ENCODE measurements at regions of chr4 and their contacts with region 1.

Region 1: DNA sequence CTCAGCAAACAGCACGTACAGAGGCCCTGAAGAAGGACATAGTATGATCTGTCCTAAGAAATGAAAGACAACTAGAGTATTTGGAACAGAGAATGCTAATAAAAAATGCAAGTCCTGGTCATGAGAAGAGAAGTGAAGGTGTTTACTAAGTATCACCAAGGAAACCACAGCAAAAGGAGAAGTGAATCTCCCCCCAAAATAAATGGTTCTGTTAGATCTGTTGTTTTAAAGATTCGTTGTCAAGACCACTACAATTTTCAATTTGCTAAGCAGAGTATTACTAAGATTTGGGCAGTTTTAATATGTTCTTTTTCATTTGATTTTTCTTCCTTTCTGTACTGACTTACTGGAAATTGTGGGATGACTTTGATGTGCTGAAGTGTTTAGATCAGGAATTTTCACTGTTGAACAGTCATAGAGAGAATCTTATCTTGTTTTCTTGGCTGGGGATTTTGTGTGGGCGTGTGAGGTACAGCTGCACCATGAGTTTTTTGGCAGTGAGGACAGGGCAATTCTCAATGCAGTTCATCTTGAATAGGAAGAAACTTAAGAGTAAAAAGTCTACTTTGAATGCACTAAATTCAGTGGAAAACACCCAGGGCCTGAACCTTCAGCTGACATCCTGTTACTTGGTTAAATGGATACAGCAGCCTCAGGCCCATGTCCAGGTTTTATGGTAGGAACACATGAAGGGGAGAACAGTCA is 132.2 kb downstream of the STIM2 start:
- DNase-seq: peak; percentile 92
- ATAC-seq: peak; percentile 78
- H3K4me3 ChIP-seq: peak overlapping the region; percentile 10 to 54 (median 36)
- H3K4me3 Mint-ChIP-seq: no peak overlapping the region
- H3K27ac ChIP-seq: peak overlapping the region; percentile 97 to 99
- H3K27ac Mint-ChIP-seq: no peak overlapping the region
- H3K4me1 ChIP-seq: peaks cover 37 to 52% of the 10 kb centered on the region in 2 donors
- H3K4me1 Mint-ChIP-seq: peaks cover 36% of the 10 kb centered on the region
- H3K27me3 ChIP-seq: no peaks in the 10 kb centered on the region
- H3K27me3 Mint-ChIP-seq: no peaks in the 10 kb centered on the region
- CTCF ChIP-seq: no peak

Region 2: GRCh38 chr4:25234390-25235370 is 1758.1 kb before region 1 on chr4:
- CTCF ChIA-PET with region 1: no interaction called
- POLR2A ChIA-PET with region 1: no interaction called
- intact Hi-C with region 1: loop called (anchors 10 kb)
- DNase-seq: peak; percentile 85
- ATAC-seq: peak; percentile 50
- H3K4me3 ChIP-seq: peak overlapping the region; percentile 72 to 91 (median 79)
- H3K4me3 Mint-ChIP-seq: peak overlapping the region; percentile 85
- H3K27ac ChIP-seq: peak overlapping the region; percentile 84 to 85
- H3K27ac Mint-ChIP-seq: peak overlapping the region; percentile 82
- H3K4me1 ChIP-seq: peaks cover 25 to 29% of the 10 kb centered on the region in 2 donors
- H3K4me1 Mint-ChIP-seq: peaks cover 39% of the 10 kb centered on the region
- H3K27me3 ChIP-seq: no peaks in the 10 kb centered on the region
- H3K27me3 Mint-ChIP-seq: no peaks in the 10 kb centered on the region
- CTCF ChIP-seq: peak; percentile 59

Region 3: DNA sequence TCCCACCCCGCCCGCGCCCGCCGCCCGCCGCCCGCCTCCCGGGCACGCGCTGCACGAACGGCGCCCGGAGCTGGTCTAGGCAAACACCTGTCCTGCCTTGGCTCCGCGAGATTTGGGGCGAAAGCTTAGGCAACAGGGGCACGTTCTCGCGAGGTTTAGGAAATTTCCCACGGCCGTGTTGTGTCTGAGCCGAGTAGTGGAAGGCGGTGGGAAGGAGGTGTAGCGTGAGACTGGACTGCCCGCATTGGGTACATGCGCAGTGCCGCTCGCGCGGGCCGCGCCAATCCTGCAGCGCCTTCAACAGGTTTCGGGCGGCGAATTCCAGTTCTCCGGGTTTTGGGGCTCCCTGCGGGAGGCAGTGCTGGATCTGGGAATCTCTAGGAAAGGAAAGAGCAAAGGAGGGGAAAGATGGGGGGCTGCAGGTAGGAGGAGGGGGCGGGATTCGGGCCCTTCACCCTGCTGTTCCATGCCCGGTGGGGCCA is 673.3 kb before region 1 on chr4:
- CTCF ChIA-PET with region 1: no interaction called
- POLR2A ChIA-PET with region 1: no interaction called
- intact Hi-C with region 1: loop called (anchors 5 kb)
- DNase-seq: peak; percentile 97
- ATAC-seq: peak; percentile 73
- H3K4me3 ChIP-seq: peak overlapping the region; percentile 75 to 91 (median 87)
- H3K4me3 Mint-ChIP-seq: peak overlapping the region; percentile 99
- H3K27ac ChIP-seq: peak overlapping the region; percentile 78 to 89
- H3K27ac Mint-ChIP-seq: peak overlapping the region; percentile 99
- H3K4me1 ChIP-seq: peaks cover 13 to 22% of the 10 kb centered on the region in 2 donors
- H3K4me1 Mint-ChIP-seq: peaks cover 27% of the 10 kb centered on the region
- H3K27me3 ChIP-seq: no peaks in the 10 kb centered on the region
- H3K27me3 Mint-ChIP-seq: no peaks in the 10 kb centered on the region
- CTCF ChIP-seq: no peak

Region 4: GRCh38 chr4:26826721-26827120 is 166.1 kb before region 1 on chr4:
- CTCF ChIA-PET with region 1: interaction called, 5 read pairs
- POLR2A ChIA-PET with region 1: no interaction called
- intact Hi-C with region 1: loop called (anchors 1 kb)
- DNase-seq: peak; percentile 84
- ATAC-seq: peak; percentile 83
- H3K4me3 ChIP-seq: peak overlapping the region in 4 of 5 experiments; percentile 7 to 59 (median 24)
- H3K4me3 Mint-ChIP-seq: peak overlapping the region; percentile 77
- H3K27ac ChIP-seq: peak overlapping the region; percentile 29 to 45
- H3K27ac Mint-ChIP-seq: peak overlapping the region; percentile 62
- H3K4me1 ChIP-seq: peaks cover 75 to 78% of the 10 kb centered on the region in 2 donors
- H3K4me1 Mint-ChIP-seq: peaks cover 79% of the 10 kb centered on the region
- H3K27me3 ChIP-seq: peaks cover 0 to 27% (median 9%) of the 10 kb centered on the region in 4 experiments
- H3K27me3 Mint-ChIP-seq: peaks cover 12% of the 10 kb centered on the region
- CTCF ChIP-seq: no peak

Region 5: GRCh38 chr4:26885912-26886274 is 106.9 kb before region 1 on chr4:
- CTCF ChIA-PET with region 1: interaction called, 17 read pairs
- POLR2A ChIA-PET with region 1: interaction called, 5 read pairs
- intact Hi-C with region 1: loop called (anchors 1 kb)
- DNase-seq: peak; percentile 87
- ATAC-seq: peak; percentile 74
- H3K4me3 ChIP-seq: peak overlapping the region in 4 of 5 experiments; percentile 25 to 61 (median 42)
- H3K4me3 Mint-ChIP-seq: peak overlapping the region; percentile 78
- H3K27ac ChIP-seq: peak overlapping the region; percentile 95 to 98
- H3K27ac Mint-ChIP-seq: peak overlapping the region; percentile 86
- H3K4me1 ChIP-seq: peaks cover 70 to 71% of the 10 kb centered on the region in 2 donors
- H3K4me1 Mint-ChIP-seq: peaks cover 83% of the 10 kb centered on the region
- H3K27me3 ChIP-seq: no peaks in the 10 kb centered on the region
- H3K27me3 Mint-ChIP-seq: no peaks in the 10 kb centered on the region
- CTCF ChIP-seq: no peak

Region 6: DNA sequence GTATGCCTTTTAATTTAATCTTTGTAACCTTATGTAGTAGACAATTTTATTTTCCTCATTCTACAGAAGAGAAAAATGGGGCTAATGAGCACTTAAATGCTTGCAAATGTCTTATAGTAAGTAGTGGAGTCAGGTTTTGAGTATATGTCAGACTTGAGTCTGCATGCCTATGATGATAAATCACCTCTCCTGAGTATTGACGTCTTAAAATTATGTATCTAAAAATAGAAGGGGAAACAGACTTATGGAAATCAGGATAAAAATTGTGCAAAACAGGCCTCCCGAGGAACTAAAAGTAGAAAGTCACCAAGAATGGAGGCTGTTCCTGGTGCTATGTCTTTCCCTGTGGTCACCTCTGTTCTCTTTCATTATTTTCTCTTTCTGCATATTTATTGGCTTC is 39.4 kb before region 1 on chr4:
- CTCF ChIA-PET with region 1: no interaction called
- POLR2A ChIA-PET with region 1: no interaction called
- intact Hi-C with region 1: loop called (anchors 5 kb)
- DNase-seq: no peak
- ATAC-seq: no peak
- H3K4me3 ChIP-seq: peak overlapping the region in 1 of 5 experiments; percentile 8
- H3K4me3 Mint-ChIP-seq: peak overlapping the region; percentile 49
- H3K27ac ChIP-seq: peak overlapping the region in 1 of 2 donors; percentile 44
- H3K27ac Mint-ChIP-seq: peak overlapping the region; percentile 66
- H3K4me1 ChIP-seq: peaks cover 7 to 19% of the 10 kb centered on the region in 2 donors
- H3K4me1 Mint-ChIP-seq: peaks cover 31% of the 10 kb centered on the region
- H3K27me3 ChIP-seq: no peaks in the 10 kb centered on the region
- H3K27me3 Mint-ChIP-seq: no peaks in the 10 kb centered on the region
- CTCF ChIP-seq: no peak

Region 7: GRCh38 chr4:27010334-27010940 is 17.6 kb after region 1 on chr4:
- CTCF ChIA-PET with region 1: interaction called, 29 read pairs
- POLR2A ChIA-PET with region 1: no interaction called
- intact Hi-C with region 1: no loop called
- DNase-seq: peak; percentile 73
- ATAC-seq: peak; percentile 80
- H3K4me3 ChIP-seq: no peak overlapping the region
- H3K4me3 Mint-ChIP-seq: no peak overlapping the region
- H3K27ac ChIP-seq: no peak overlapping the region
- H3K27ac Mint-ChIP-seq: peak overlapping the region; percentile 57
- H3K4me1 ChIP-seq: no peaks in the 10 kb centered on the region
- H3K4me1 Mint-ChIP-seq: peaks cover 9% of the 10 kb centered on the region
- H3K27me3 ChIP-seq: no peaks in the 10 kb centered on the region
- H3K27me3 Mint-ChIP-seq: no peaks in the 10 kb centered on the region
- CTCF ChIP-seq: peak; percentile 99

Measured in B cell (primary cell).